ENCODE measurements at regions of chr6 and their contacts with region 1.

Region 1: DNA sequence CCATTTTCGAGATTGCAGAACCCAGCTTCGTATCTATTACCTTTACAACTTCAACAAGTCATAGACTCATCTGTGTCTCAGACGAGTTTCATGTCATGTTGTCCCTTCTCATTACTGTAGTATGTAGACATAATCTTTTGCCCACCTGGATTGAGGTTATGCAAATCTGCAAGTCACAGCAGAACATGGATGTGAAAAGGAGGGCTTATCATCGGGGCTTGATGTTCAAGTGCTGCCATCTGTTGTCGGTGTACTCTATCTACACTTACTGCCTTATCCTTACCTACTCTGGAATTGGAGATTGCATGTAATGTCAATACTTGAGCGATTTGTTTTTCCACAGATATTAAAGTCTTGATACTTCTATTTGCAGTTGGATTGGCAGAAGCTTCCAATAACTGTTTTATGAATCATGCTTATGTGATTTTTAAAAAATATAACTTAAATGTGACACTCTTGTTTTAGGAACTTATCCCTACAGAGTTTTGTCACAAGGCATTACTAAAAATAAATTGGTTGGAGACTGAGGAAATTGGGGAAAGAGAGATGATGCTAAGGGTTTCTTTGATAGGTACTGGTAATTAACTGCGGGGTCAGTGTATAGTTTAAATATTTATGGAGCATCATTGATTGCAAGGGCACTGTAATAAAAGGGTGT is 3.0 kb upstream of the GOPC start:
- DNase-seq: peak in 3 of 6 donors; percentile 24 to 52 (median 36)
- ATAC-seq: peak in 3 of 4 donors; percentile 24 to 34 (median 33)
- H3K4me3 ChIP-seq: no peak overlapping the region
- H3K27ac ChIP-seq: no peak overlapping the region
- H3K4me1 ChIP-seq: peaks cover 0 to 8% (median 6%) of the 10 kb centered on the region in 3 donors
- H3K27me3 ChIP-seq: no peaks in the 10 kb centered on the region
- CTCF ChIP-seq: peak; percentile 20 to 49 (median 39)

Region 2: DNA sequence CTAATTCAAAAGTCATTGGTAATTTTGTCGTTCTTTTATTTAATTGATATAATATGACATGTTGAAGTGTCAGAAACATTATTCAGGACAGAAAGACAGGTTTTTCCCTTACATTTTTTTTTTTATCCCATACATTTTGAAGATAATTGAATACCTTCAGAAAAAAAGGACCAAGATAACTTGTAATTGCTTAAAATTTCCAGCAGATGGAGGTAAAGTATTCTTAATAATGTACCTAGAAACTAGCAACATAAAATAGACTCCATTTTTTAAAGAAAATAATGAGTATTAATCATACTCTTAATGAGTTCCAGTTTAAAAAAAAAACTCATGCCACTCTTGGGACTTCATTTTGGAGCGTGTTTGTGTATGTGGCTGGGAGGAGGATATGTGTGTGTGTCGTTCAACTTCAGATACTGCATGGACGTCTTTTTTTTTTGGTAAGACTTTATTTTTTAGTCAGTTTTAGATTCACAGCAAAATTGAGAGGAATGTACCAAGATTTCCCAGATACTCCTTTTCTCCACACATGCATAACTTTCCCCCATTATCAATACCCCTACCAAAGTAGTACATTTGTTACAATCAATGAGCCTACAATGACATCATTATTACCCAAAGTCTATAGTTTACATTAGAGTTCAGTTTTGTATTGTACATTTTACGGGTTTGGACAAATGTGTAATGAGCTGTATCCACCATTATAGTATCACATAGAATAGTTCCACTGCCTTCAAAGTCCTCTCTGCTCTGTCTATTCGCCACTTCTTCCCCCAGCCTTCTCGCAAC is 259.0 kb before region 1 on chr6:
- intact Hi-C with region 1: loop called in 1 of 3 experiments (anchors 5 kb)
- DNase-seq: no peak
- ATAC-seq: peak; percentile 31 to 73 (median 68)
- H3K4me3 ChIP-seq: no peak overlapping the region
- H3K27ac ChIP-seq: no peak overlapping the region
- H3K4me1 ChIP-seq: no peaks in the 10 kb centered on the region
- H3K27me3 ChIP-seq: no peaks in the 10 kb centered on the region
- CTCF ChIP-seq: peak in 3 of 4 donors; percentile 19 to 41 (median 30)

Region 3: GRCh38 chr6:117555882-117556498 is 49.3 kb before region 1 on chr6:
- intact Hi-C with region 1: no loop called
- DNase-seq: peak in 2 of 6 donors; percentile 26 to 58
- ATAC-seq: peak in 3 of 4 donors; percentile 60 to 72 (median 71)
- H3K4me3 ChIP-seq: no peak overlapping the region
- H3K27ac ChIP-seq: no peak overlapping the region
- H3K4me1 ChIP-seq: no peaks in the 10 kb centered on the region
- H3K27me3 ChIP-seq: no peaks in the 10 kb centered on the region
- CTCF ChIP-seq: peak; percentile 76 to 88 (median 77)

Region 4: GRCh38 chr6:117817499-117817898 is 212.2 kb after region 1 on chr6:
- intact Hi-C with region 1: no loop called
- DNase-seq: no peak
- ATAC-seq: no peak
- H3K4me3 ChIP-seq: no peak overlapping the region
- H3K27ac ChIP-seq: no peak overlapping the region
- H3K4me1 ChIP-seq: no peaks in the 10 kb centered on the region
- H3K27me3 ChIP-seq: no peaks in the 10 kb centered on the region
- CTCF ChIP-seq: no peak

Measured in pancreas (tissue), 10 donors.